Heart left ventricle (tissue), 16 donors: ENCODE measurements at regions of chr14 and their contacts with region 1.

Region 1: GRCh38 chr14:39266871-39267591 is 33.3 kb downstream of the MIA2 start:
- DNase-seq: peak; percentile 86 to 91 (median 89)
- ATAC-seq: peak; percentile 90 to 95 (median 95)
- H3K4me3 ChIP-seq: peak overlapping the region; percentile 57 to 99 (median 82)
- H3K27ac ChIP-seq: peak overlapping the region; percentile 90 to 100 (median 98)
- H3K4me1 ChIP-seq: peaks cover 0 to 52% (median 24%) of the 10 kb centered on the region in 12 donors
- H3K27me3 ChIP-seq: no peaks in the 10 kb centered on the region
- CTCF ChIP-seq: no peak
- POLR2A ChIP-seq: peak in 1 of 2 donors; percentile 51

Region 2: GRCh38 chr14:39102969-39103957 is 163.8 kb before region 1 on chr14 and contains the start of gene SEC23A:
- intact Hi-C with region 1: loop called in 2 of 10 experiments (anchors 5 to 10 kb)
- DNase-seq: peak; percentile 93 to 95 (median 94)
- ATAC-seq: peak; percentile 97 to 99 (median 99)
- H3K4me3 ChIP-seq: peak within 1 kb of the TSS; percentile 69 to 99 (median 90)
- H3K27ac ChIP-seq: peak within 1 kb of the TSS; percentile 89 to 99 (median 97)
- H3K4me1 ChIP-seq: peaks cover 2 to 54% (median 34%) of the 10 kb centered on the region in 12 donors
- H3K27me3 ChIP-seq: no peaks in the 10 kb centered on the region
- CTCF ChIP-seq: peak in 3 of 12 donors; percentile 4 to 18 (median 13)
- POLR2A ChIP-seq: peak; percentile 64 to 92
- total RNA-seq, gene SEC23A: 68.1 to 116 (median 89.3) TPM

Region 3: GRCh38 chr14:39169541-39169900 is 97.5 kb before region 1 on chr14:
- intact Hi-C with region 1: loop called in 6 of 10 experiments (anchors 1 to 10 kb)
- DNase-seq: no peak
- ATAC-seq: peak in 3 of 4 donors; percentile 23 to 60 (median 35)
- H3K4me3 ChIP-seq: peak overlapping the region; percentile 69 to 88 (median 82)
- H3K27ac ChIP-seq: peak overlapping the region; percentile 89 to 99 (median 98)
- H3K4me1 ChIP-seq: peaks cover 0 to 45% (median 27%) of the 10 kb centered on the region in 12 donors
- H3K27me3 ChIP-seq: no peaks in the 10 kb centered on the region
- CTCF ChIP-seq: no peak
- POLR2A ChIP-seq: no peak

Region 4: DNA sequence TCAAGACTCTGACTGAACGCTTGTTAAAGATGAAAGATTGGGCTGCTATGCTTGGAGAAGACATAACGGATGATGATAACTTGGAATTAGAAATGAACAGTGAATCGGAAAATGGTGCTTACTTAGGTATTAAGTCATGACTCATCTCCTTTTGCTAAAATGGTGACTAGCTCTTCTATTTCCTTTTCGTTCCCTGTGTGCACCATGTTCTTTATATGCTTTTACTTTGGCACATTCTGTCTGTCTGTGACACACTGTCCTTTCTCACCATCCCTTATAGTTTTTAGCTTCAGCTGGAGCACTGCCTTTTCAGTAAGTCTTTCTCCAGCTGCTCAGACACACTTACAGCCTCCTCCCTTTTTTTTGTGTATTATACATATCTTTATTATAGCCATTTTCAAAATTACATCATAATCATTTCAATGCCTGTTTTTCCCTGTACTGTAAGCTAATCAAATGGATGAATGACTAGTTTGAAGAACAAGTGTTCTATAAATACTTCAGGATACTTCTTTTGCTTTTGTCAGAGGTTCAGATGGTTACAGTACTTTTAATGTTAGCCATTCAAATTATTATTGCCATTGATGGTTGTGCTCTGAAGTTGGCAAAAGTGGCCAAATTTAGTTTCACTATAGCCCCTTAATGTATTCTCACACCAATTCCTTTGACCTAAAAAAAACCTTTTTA is 35.2 kb after region 1 on chr14:
- intact Hi-C with region 1: loop called in 1 of 10 experiments (anchors 5 kb)
- DNase-seq: no peak
- ATAC-seq: peak; percentile 46 to 74 (median 62)
- H3K4me3 ChIP-seq: no peak overlapping the region
- H3K27ac ChIP-seq: peak overlapping the region in 8 of 12 donors; percentile 1 to 65 (median 50)
- H3K4me1 ChIP-seq: peaks cover 0 to 15% (median 0%) of the 10 kb centered on the region in 12 donors
- H3K27me3 ChIP-seq: no peaks in the 10 kb centered on the region
- CTCF ChIP-seq: no peak
- POLR2A ChIP-seq: no peak

Region 5: DNA sequence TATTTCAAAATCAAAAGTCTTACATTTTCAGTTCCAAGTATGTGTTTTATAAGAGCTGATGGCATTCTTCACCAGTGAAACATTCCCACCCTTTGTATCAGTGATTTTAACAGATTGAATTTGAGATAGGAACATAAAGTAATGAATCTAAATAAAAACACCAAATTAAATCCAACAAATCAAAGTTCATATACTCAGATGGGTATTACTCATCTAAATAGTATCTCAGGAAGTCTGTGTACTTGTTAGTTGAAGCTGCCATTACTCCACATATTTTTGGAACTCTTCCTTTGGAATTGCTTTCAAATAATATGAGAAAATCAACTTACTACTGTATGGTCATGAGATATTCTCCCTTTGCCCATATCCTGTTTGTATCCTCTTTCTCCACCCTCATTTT is 55.8 kb after region 1 on chr14:
- intact Hi-C with region 1: no loop called
- DNase-seq: no peak
- ATAC-seq: no peak
- H3K4me3 ChIP-seq: no peak overlapping the region
- H3K27ac ChIP-seq: no peak overlapping the region
- H3K4me1 ChIP-seq: no peaks in the 10 kb centered on the region
- H3K27me3 ChIP-seq: no peaks in the 10 kb centered on the region
- CTCF ChIP-seq: no peak
- POLR2A ChIP-seq: no peak

Region 6: GRCh38 chr14:39432179-39432618 is 165.2 kb after region 1 on chr14 and contains the start of gene FBXO33:
- intact Hi-C with region 1: loop called in 4 of 10 experiments (anchors 2 to 10 kb)
- DNase-seq: peak; percentile 97 to 99 (median 97)
- ATAC-seq: peak; percentile 92 to 96 (median 95)
- H3K4me3 ChIP-seq: peak within 1 kb of the TSS; percentile 71 to 97 (median 92)
- H3K27ac ChIP-seq: peak within 1 kb of the TSS; percentile 92 to 100 (median 99)
- H3K4me1 ChIP-seq: peaks cover 0 to 44% (median 32%) of the 10 kb centered on the region in 12 donors
- H3K27me3 ChIP-seq: no peaks in the 10 kb centered on the region
- CTCF ChIP-seq: no peak
- POLR2A ChIP-seq: peak in 1 of 2 donors; percentile 30
- total RNA-seq, gene FBXO33: 3.8 to 8.4 (median 5.8) TPM